Left cardiac atrium (tissue), 4 donors: ENCODE measurements at regions of chr4 and their contacts with region 1.

Region 1: DNA sequence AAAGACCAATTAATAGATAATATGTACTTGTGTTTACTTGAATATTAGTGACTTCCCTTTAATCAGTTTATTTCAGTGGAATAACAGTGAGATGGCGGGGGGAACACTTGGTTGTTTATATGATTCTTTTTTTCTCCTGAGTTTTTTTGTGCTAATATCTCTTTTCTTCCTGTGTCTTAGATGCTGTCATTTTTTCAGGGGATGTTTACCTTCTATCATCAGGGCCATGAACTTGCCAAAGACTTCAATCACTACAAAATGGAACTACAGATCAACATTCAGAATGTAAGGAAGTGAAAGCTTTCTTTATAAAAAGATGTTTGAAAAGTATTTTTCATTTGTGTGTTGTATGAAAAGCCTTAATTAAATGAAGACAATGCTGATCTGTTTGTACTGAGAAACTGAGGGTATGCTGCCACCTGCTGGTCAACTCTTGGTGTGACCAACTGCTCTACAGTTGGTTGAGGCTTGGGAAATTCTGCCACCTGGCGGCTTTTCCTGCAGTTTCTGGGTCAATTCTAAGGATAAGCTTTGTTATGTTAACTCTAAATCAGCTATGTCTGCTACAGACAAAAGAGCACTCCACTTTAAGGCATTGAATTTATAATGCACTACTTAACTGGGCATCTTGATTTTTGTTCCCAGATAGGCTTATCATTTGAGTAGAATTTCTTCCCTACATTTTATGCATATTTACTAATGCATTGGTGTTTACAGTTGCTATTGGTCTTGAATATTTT is 134.8 kb downstream of the ARHGAP10 start:
- DNase-seq: peak; percentile 93
- ATAC-seq: peak; percentile 90 to 91

Region 2: GRCh38 chr4:147707865-147708672 is 158.6 kb before region 1 on chr4:
- intact Hi-C with region 1: loop called (anchors 1 to 2 kb)
- DNase-seq: peak; percentile 42
- ATAC-seq: peak; percentile 57 to 68